ENCODE measurements at regions of chrX and their contacts with region 1.

Region 1: GRCh38 chrX:23901805-23902204 is 5.9 kb downstream of the APOO start:
- DNase-seq: peak; percentile 59
- H3K4me3 ChIP-seq: peak overlapping the region in 1 of 4 donors; percentile 20
- H3K27ac ChIP-seq: peak overlapping the region; percentile 70 to 82 (median 72)
- H3K4me1 ChIP-seq: peaks cover 7 to 29% (median 11%) of the 10 kb centered on the region in 4 donors
- H3K27me3 ChIP-seq: no peaks in the 10 kb centered on the region
- CTCF ChIP-seq: peak; percentile 24 to 61 (median 38)
- EP300 ChIP-seq: no peak
- POLR2A ChIP-seq: no peak

Region 2: GRCh38 chrX:23694606-23695005 is 207.2 kb before region 1 on chrX:
- in situ Hi-C with region 1: loop called (anchors 5 to 25 kb)
- intact Hi-C with region 1: loop called (anchors 10 kb)
- DNase-seq: peak; percentile 55
- H3K4me3 ChIP-seq: no peak overlapping the region
- H3K27ac ChIP-seq: no peak overlapping the region
- H3K4me1 ChIP-seq: no peaks in the 10 kb centered on the region
- H3K27me3 ChIP-seq: no peaks in the 10 kb centered on the region
- CTCF ChIP-seq: peak in 4 of 5 experiments; percentile 21 to 57 (median 40)
- EP300 ChIP-seq: no peak
- POLR2A ChIP-seq: no peak

Region 3: GRCh38 chrX:23782863-23783568 is 118.8 kb before region 1 on chrX and contains the start of gene SAT1:
- in situ Hi-C with region 1: loop called in 3 of 4 experiments (anchors 5 to 25 kb)
- intact Hi-C with region 1: loop called (anchors 2 kb)
- DNase-seq: peak; percentile 96
- H3K4me3 ChIP-seq: peak within 1 kb of the TSS; percentile 48 to 81 (median 76)
- H3K27ac ChIP-seq: peak within 1 kb of the TSS; percentile 83 to 97 (median 97)
- H3K4me1 ChIP-seq: peaks cover 0 to 15% (median 0%) of the 10 kb centered on the region in 4 donors
- H3K27me3 ChIP-seq: no peaks in the 10 kb centered on the region
- CTCF ChIP-seq: peak; percentile 68 to 89 (median 74)
- EP300 ChIP-seq: no peak
- POLR2A ChIP-seq: peak; percentile 99
- total RNA-seq, gene SAT1: 313 to 1,184 (median 689) TPM

Region 4: GRCh38 chrX:24332878-24333277 is 431.1 kb after region 1 on chrX:
- in situ Hi-C with region 1: no loop called
- intact Hi-C with region 1: no loop called
- DNase-seq: no peak
- H3K4me3 ChIP-seq: no peak overlapping the region
- H3K27ac ChIP-seq: no peak overlapping the region
- H3K4me1 ChIP-seq: no peaks in the 10 kb centered on the region
- H3K27me3 ChIP-seq: no peaks in the 10 kb centered on the region
- CTCF ChIP-seq: no peak
- EP300 ChIP-seq: no peak
- POLR2A ChIP-seq: no peak